ENCODE measurements at regions of chr13 and their contacts with region 1.

Region 1: DNA sequence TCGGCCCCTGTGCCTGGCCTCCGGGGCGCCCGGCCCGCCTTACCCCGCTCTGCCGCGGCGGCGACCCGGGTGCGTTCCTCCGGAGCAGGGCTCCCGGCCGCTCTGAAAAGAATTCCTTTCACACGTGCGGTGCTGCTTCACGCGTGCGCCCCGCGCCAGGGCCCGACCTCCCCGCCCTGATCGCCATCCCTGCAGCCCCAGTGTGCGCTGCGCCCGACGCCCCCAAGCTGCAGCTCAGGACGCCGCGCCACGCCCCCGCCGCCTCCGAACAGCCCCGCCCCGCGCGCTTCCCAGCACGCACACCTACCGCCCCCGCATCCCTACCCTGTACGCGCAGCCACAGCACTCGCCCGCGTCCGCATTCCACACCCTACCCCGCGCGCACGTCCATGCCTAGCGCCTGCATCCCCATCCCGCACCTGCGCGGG is at the start of gene GJA3:
- DNase-seq: peak; percentile 43 to 81 (median 80)
- ATAC-seq: peak; percentile 75 to 84
- H3K4me3 ChIP-seq: peak within 1 kb of the TSS; percentile 49
- H3K27ac ChIP-seq: peak within 1 kb of the TSS; percentile 50
- H3K4me1 ChIP-seq: no peaks in the 10 kb centered on the region
- H3K27me3 ChIP-seq: no peaks in the 10 kb centered on the region
- total RNA-seq, gene GJA3: 5.0 to 11.0 (median 8.5) TPM

Region 2: GRCh38 chr13:20049558-20050473 is 111.0 kb before region 1 on chr13:
- intact Hi-C with region 1: loop called in 2 of 4 experiments (anchors 10 kb)
- DNase-seq: no peak
- ATAC-seq: no peak
- H3K4me3 ChIP-seq: no peak overlapping the region
- H3K27ac ChIP-seq: no peak overlapping the region
- H3K4me1 ChIP-seq: peaks cover 1% of the 10 kb centered on the region
- H3K27me3 ChIP-seq: no peaks in the 10 kb centered on the region

Region 3: GRCh38 chr13:20127577-20128466 is 33.0 kb before region 1 on chr13:
- intact Hi-C with region 1: loop called in 1 of 4 experiments (anchors 5 kb)
- DNase-seq: peak; percentile 72 to 90 (median 86)
- ATAC-seq: peak; percentile 87 to 88
- H3K4me3 ChIP-seq: peak overlapping the region; percentile 40
- H3K27ac ChIP-seq: peak overlapping the region; percentile 61
- H3K4me1 ChIP-seq: no peaks in the 10 kb centered on the region
- H3K27me3 ChIP-seq: no peaks in the 10 kb centered on the region

Measured in right cardiac atrium (tissue), 5 donors.